Activated CD4-positive, alpha-beta memory T cell treated with anti-CD3 and anti-CD28 coated beads, Interleukin-2, amount 10 ng/mL, durations not matched to agents 7 days and 5 days (primary cell): ENCODE measurements at regions of chr19 and their contacts with region 1.

Region 1: DNA sequence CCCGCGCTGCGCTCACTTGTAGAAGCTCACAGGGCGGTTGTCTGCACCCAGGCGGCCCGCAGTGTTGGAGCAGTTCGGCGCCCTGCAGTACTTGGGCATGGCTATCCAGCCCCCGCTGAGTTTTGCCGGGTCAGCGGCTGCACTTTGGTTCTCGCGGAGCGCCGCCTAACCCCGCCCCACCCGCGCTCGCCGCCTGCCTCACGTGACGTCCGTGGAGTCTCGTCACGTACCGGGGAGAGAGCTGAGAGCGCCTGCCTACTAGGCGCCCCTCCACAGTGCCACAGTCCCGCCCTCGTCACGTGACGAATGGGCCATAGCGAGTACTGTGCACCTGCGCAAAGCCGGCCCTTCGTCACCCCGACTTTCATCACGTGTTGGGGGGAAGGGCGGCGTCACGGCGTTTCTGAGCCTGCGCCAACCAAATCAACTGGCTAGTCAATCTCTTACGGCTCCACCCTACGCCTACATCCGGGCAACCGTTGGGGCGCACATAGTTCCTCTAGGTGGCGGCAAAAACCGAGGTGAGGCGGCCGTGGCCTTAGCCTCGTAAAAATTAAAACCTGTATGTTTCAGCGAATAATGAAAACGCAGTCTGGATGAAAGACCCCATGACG is at the start of gene THAP8:
- DNase-seq: peak; percentile 100
- H3K4me3 Mint-ChIP-seq: peak within 1 kb of the TSS; percentile 98
- H3K27ac Mint-ChIP-seq: peak within 1 kb of the TSS; percentile 95
- H3K4me1 Mint-ChIP-seq: peaks cover 53% of the 10 kb centered on the region
- H3K27me3 Mint-ChIP-seq: no peaks in the 10 kb centered on the region
- total RNA-seq, gene THAP8: 5.7 TPM

Region 2: DNA sequence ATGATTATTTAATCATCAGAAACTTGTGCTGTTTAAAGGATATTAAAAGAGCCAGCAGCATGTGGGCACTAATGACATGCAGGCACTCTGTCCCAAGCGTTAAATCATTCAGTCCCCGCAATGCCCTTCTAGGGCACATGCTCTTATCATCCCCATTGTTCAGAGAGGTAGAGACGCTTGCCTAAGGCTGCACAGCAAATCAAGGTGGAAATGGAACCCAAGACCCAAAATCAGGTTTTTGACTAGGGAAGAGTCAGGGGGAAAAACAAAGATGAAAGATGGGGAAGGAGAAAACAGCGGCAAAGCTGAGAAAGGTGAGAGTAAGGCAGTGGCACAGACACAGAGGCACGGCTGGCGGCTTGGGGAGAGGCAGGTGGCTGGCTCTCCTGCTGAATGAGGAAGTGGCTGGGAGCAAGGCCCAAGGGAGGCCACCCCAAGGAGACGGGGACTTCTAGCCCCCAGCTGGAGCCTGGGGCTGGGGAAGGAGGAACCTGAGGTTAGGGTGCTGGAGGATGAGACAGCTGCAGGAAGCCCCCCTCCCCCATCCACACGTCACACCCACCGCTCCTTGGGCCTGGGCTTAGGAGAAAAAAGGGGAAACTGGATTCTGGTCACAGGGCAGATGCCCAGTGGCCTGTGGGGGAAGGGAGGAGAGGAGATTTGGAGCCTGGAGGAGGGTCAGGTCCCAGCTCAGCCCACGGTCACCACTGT is 145.1 kb before region 1 on chr19:
- CTCF ChIA-PET with region 1: no interaction called
- POLR2A ChIA-PET with region 1: no interaction called
- DNase-seq: no peak
- H3K4me3 Mint-ChIP-seq: no peak overlapping the region
- H3K27ac Mint-ChIP-seq: no peak overlapping the region
- H3K4me1 Mint-ChIP-seq: peaks cover 22% of the 10 kb centered on the region
- H3K27me3 Mint-ChIP-seq: no peaks in the 10 kb centered on the region

Region 3: GRCh38 chr19:35949131-35949530 is 105.1 kb before region 1 on chr19:
- CTCF ChIA-PET with region 1: interaction called, 13 read pairs
- POLR2A ChIA-PET with region 1: interaction called, 5 read pairs
- DNase-seq: no peak
- H3K4me3 Mint-ChIP-seq: no peak overlapping the region
- H3K27ac Mint-ChIP-seq: no peak overlapping the region
- H3K4me1 Mint-ChIP-seq: peaks cover 29% of the 10 kb centered on the region
- H3K27me3 Mint-ChIP-seq: no peaks in the 10 kb centered on the region

Region 4: GRCh38 chr19:35995048-35995993 is 58.9 kb before region 1 on chr19 and contains the start of gene SDHAF1:
- CTCF ChIA-PET with region 1: interaction called, 3 read pairs
- POLR2A ChIA-PET with region 1: interaction called, 20 read pairs
- DNase-seq: peak; percentile 96
- H3K4me3 Mint-ChIP-seq: peak within 1 kb of the TSS; percentile 82
- H3K27ac Mint-ChIP-seq: peak within 1 kb of the TSS; percentile 79
- H3K4me1 Mint-ChIP-seq: peaks cover 31% of the 10 kb centered on the region
- H3K27me3 Mint-ChIP-seq: no peaks in the 10 kb centered on the region
- total RNA-seq, gene SDHAF1: 17.3 to 18.3 TPM

Region 5: DNA sequence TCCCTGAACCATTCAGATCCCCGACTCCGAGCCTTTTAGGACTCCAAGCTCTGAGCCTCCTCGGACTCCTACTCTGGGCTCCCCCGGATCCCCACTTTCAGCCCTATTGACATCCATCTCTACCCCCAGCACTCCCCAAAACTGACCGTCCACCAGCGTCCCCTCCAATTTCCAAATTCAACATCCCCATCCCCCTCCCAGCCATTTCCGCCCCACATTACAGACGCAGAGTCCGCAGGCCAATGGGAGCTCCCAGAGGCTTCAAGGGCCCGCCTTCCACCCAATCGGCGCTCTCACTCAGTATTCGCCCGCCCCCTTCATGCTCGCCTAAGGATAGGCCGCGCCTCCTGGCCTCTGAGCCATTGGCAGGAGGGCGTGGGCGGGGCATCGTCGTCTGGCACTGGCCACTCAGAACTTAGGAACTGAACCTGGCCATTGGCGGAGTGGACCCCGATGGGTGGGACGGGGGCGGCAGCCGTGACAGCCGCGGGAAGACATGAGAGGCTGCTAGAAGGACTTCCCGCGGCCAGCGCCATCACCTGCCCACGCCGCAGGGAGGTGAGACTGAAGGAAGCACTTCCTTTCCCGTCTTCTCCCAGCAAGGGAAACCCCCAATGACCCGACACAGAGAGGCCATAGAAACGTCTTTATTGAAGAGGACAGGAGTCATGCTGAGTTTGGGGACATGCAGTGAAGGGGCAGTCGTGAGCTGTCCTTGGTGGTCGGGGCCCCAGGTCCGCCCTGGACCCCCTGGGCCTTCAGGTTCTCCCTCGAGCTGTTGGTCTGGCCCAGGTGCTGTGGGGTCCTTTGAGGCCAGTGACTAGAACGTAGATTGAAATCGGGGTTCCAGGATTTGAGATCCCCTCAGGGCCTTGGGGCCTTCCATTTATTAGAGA is 39.9 kb before region 1 on chr19 and contains the start of gene ALKBH6:
- CTCF ChIA-PET with region 1: interaction called, 10 read pairs
- POLR2A ChIA-PET with region 1: interaction called, 16 read pairs
- DNase-seq: peak; percentile 100
- H3K4me3 Mint-ChIP-seq: peak within 1 kb of the TSS; percentile 93
- H3K27ac Mint-ChIP-seq: peak within 1 kb of the TSS; percentile 89
- H3K4me1 Mint-ChIP-seq: peaks cover 45% of the 10 kb centered on the region
- H3K27me3 Mint-ChIP-seq: no peaks in the 10 kb centered on the region
- total RNA-seq, gene ALKBH6: 44.7 to 45.4 TPM

Region 6: DNA sequence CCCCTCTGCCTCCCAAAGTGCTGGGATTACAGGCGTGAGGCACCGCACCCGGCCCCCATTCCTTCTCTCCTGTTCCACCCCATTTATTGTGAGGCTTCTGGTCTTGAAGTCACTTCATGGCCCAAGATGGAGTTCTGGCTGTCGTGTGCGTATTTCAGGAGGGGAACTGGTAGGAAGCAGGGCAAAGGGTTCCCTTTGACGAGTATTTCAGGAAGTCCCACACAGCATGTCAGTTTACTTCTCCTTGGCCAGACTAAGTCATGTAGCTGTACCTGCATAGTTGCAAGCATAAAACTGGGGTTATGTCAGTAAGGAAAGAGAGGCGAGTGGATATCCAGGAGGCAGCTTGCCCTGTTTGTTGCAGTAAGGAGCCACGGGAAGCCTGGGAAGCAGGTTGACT is 10.6 kb after region 1 on chr19:
- CTCF ChIA-PET with region 1: interaction called, 3 read pairs
- POLR2A ChIA-PET with region 1: interaction called, 18 read pairs
- DNase-seq: no peak
- H3K4me3 Mint-ChIP-seq: no peak overlapping the region
- H3K27ac Mint-ChIP-seq: no peak overlapping the region
- H3K4me1 Mint-ChIP-seq: no peaks in the 10 kb centered on the region
- H3K27me3 Mint-ChIP-seq: no peaks in the 10 kb centered on the region

Region 7: GRCh38 chr19:36081385-36081784 is 27.2 kb after region 1 on chr19:
- CTCF ChIA-PET with region 1: no interaction called
- POLR2A ChIA-PET with region 1: no interaction called
- DNase-seq: no peak
- H3K4me3 Mint-ChIP-seq: no peak overlapping the region
- H3K27ac Mint-ChIP-seq: no peak overlapping the region
- H3K4me1 Mint-ChIP-seq: no peaks in the 10 kb centered on the region
- H3K27me3 Mint-ChIP-seq: no peaks in the 10 kb centered on the region

Region 8: GRCh38 chr19:36114763-36115452 is 60.7 kb after region 1 on chr19 and contains the start of gene POLR2I:
- CTCF ChIA-PET with region 1: interaction called, 3 read pairs
- POLR2A ChIA-PET with region 1: interaction called, 13 read pairs
- DNase-seq: peak; percentile 99
- H3K4me3 Mint-ChIP-seq: peak within 1 kb of the TSS; percentile 92
- H3K27ac Mint-ChIP-seq: peak within 1 kb of the TSS; percentile 95
- H3K4me1 Mint-ChIP-seq: peaks cover 47% of the 10 kb centered on the region
- H3K27me3 Mint-ChIP-seq: no peaks in the 10 kb centered on the region
- total RNA-seq, gene POLR2I: 47.3 to 57.4 TPM

Region 9: GRCh38 chr19:36418287-36419001 is 364.2 kb after region 1 on chr19 and contains the start of gene ZFP82:
- CTCF ChIA-PET with region 1: no interaction called
- POLR2A ChIA-PET with region 1: no interaction called
- DNase-seq: peak; percentile 76
- H3K4me3 Mint-ChIP-seq: peak within 1 kb of the TSS; percentile 86
- H3K27ac Mint-ChIP-seq: peak within 1 kb of the TSS; percentile 85
- H3K4me1 Mint-ChIP-seq: peaks cover 19% of the 10 kb centered on the region
- H3K27me3 Mint-ChIP-seq: peaks cover 7% of the 10 kb centered on the region
- total RNA-seq, gene ZFP82: 3.9 to 4.2 TPM